ENCODE measurements at regions of chrX and their contacts with region 1.

Region 1: GRCh38 chrX:40266490-40267333 is 169.0 kb upstream of the BCOR start:
- DNase-seq: peak; percentile 67 to 84 (median 70)
- ATAC-seq: peak; percentile 84 to 92 (median 90)
- H3K4me3 ChIP-seq: peak overlapping the region; percentile 4 to 63 (median 50)
- H3K27ac ChIP-seq: peak overlapping the region in 11 of 12 donors; percentile 21 to 84 (median 60)
- H3K4me1 ChIP-seq: peaks cover 0 to 31% (median 13%) of the 10 kb centered on the region in 12 donors
- H3K27me3 ChIP-seq: peaks cover 0 to 11% (median 0%) of the 10 kb centered on the region in 9 donors
- CTCF ChIP-seq: peak; percentile 47 to 76 (median 61)
- POLR2A ChIP-seq: no peak

Region 2: DNA sequence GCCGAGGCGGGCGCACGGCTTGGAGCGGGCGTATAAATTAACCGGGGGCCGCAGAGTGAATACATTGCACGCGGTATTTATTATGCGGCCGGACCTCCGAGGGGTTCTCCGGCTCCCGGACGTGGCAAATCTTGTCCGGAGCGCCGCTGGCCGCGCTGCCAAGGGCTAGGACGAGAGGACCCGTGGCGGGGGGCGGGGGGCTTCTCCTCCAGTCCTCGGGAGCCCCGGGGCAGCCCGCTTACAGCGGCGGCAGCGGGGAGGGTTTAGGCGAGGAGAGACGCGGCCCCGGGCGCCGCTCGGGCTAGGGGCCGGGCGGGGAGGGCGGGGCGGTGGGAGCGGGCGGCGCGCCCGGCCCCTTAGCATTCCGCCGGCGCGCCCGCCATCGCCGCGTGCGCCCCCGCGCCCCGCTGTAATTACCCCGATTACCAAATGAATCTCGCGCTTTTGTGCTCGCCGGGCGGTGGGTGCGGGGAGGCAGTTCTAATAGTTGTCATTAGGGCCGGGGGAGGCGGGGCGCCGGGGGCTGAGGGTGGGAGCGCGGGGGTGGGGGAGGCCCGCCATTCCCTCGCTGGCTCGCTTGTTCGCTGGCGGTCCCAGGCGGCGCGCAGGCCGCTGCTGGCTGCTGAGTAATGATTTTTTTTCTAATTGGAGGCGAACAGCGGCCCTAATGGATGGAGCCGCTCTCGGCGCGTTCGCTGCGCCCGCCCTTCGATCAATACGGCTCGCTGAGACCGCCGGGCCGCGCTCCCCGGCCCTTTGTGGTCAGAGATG is 445.6 kb before region 1 on chrX:
- intact Hi-C with region 1: loop called in 6 of 10 experiments (anchors 5 to 10 kb)
- DNase-seq: peak in 4 of 5 donors; percentile 25 to 62 (median 40)
- ATAC-seq: peak in 1 of 4 donors; percentile 68
- H3K4me3 ChIP-seq: peak overlapping the region; percentile 17 to 57 (median 48)
- H3K27ac ChIP-seq: peak overlapping the region in 2 of 12 donors; percentile 33 to 45
- H3K4me1 ChIP-seq: peaks cover 0 to 21% (median 5%) of the 10 kb centered on the region in 12 donors
- H3K27me3 ChIP-seq: peaks cover 0 to 60% (median 0%) of the 10 kb centered on the region in 9 donors
- CTCF ChIP-seq: no peak
- POLR2A ChIP-seq: no peak

Region 3: GRCh38 chrX:40097497-40098263 is 169.0 kb before region 1 on chrX and contains the start of gene BCOR:
- intact Hi-C with region 1: loop called in 6 of 10 experiments (anchors 2 to 10 kb)
- DNase-seq: peak; percentile 77 to 86 (median 82)
- ATAC-seq: peak in 3 of 4 donors; percentile 28 to 66 (median 59)
- H3K4me3 ChIP-seq: peak within 1 kb of the TSS; percentile 63 to 98 (median 78)
- H3K27ac ChIP-seq: peak within 1 kb of the TSS; percentile 84 to 97 (median 90)
- H3K4me1 ChIP-seq: peaks cover 0 to 63% (median 9%) of the 10 kb centered on the region in 12 donors
- H3K27me3 ChIP-seq: peaks cover 0 to 92% (median 0%) of the 10 kb centered on the region in 9 donors
- CTCF ChIP-seq: no peak
- POLR2A ChIP-seq: peak in 1 of 2 donors; percentile 83
- total RNA-seq, gene BCOR: 11.3 to 40.1 (median 19.5) TPM

Region 4: GRCh38 chrX:40153335-40154249 is 113.1 kb before region 1 on chrX:
- intact Hi-C with region 1: loop called in 1 of 10 experiments (anchors 5 kb)
- DNase-seq: peak in 4 of 5 donors; percentile 37 to 70 (median 62)
- ATAC-seq: peak in 3 of 4 donors; percentile 3 to 22 (median 21)
- H3K4me3 ChIP-seq: peak overlapping the region; percentile 21 to 63 (median 50)
- H3K27ac ChIP-seq: peak overlapping the region; percentile 65 to 89 (median 81)
- H3K4me1 ChIP-seq: peaks cover 0 to 78% (median 29%) of the 10 kb centered on the region in 12 donors
- H3K27me3 ChIP-seq: peaks cover 0 to 96% (median 0%) of the 10 kb centered on the region in 9 donors
- CTCF ChIP-seq: peak in 6 of 12 donors; percentile 9 to 37 (median 27)
- POLR2A ChIP-seq: no peak

Region 5: DNA sequence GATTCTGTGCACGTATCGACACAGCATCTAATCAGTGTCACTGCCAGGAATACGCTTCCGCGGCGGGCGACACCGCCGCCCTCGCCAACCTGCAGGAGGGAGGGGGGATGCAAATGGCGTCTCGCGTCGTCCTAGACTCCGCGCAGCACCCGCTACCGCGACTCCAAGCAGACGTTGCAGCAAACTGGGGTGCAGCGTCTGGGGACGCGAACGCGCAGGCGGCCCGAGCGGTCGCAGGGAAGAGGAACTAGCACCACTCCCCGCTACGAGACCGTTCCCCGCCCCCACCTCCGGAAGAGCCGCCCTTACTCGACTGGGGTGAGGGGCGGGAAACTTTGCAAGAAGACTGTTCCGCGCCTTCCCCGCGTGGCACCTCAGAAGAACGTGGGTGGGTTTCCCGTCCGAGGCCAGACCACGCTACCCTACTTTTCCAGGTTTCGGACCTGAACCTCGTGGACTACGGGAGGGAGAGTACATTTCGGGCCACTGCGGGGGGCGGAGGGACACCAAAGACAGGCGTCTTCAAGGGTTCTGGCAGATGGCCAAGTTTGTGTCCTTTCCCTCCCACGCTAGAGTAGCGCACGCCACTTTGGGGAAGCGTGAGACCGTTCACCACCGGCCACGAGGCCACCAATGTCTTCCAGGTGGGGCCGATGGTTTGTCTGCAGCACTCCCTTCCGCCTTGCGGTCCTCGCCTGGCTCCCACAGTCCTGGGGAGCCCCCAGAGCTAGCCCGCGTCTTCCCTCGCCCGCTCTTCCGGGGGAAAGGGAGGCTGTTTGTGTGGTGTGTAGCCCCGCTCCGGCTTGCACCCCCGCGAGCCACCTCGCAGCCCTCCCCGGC is 91.0 kb before region 1 on chrX:
- intact Hi-C with region 1: loop called in 7 of 10 experiments (anchors 5 to 10 kb)
- DNase-seq: peak; percentile 78 to 88 (median 82)
- ATAC-seq: peak; percentile 40 to 66 (median 62)
- H3K4me3 ChIP-seq: peak overlapping the region; percentile 35 to 79 (median 60)
- H3K27ac ChIP-seq: peak overlapping the region; percentile 84 to 99 (median 94)
- H3K4me1 ChIP-seq: peaks cover 0 to 41% (median 20%) of the 10 kb centered on the region in 12 donors
- H3K27me3 ChIP-seq: peaks cover 0 to 78% (median 0%) of the 10 kb centered on the region in 9 donors
- CTCF ChIP-seq: no peak
- POLR2A ChIP-seq: peak in 1 of 2 donors; percentile 31

Region 6: GRCh38 chrX:40343319-40343718 is 76.6 kb after region 1 on chrX:
- intact Hi-C with region 1: no loop called
- DNase-seq: no peak
- ATAC-seq: no peak
- H3K4me3 ChIP-seq: no peak overlapping the region
- H3K27ac ChIP-seq: no peak overlapping the region
- H3K4me1 ChIP-seq: no peaks in the 10 kb centered on the region
- H3K27me3 ChIP-seq: peaks cover 0 to 8% (median 0%) of the 10 kb centered on the region in 9 donors
- CTCF ChIP-seq: no peak
- POLR2A ChIP-seq: no peak